ENCODE measurements at regions of chr12 and their contacts with region 1.

Region 1: DNA sequence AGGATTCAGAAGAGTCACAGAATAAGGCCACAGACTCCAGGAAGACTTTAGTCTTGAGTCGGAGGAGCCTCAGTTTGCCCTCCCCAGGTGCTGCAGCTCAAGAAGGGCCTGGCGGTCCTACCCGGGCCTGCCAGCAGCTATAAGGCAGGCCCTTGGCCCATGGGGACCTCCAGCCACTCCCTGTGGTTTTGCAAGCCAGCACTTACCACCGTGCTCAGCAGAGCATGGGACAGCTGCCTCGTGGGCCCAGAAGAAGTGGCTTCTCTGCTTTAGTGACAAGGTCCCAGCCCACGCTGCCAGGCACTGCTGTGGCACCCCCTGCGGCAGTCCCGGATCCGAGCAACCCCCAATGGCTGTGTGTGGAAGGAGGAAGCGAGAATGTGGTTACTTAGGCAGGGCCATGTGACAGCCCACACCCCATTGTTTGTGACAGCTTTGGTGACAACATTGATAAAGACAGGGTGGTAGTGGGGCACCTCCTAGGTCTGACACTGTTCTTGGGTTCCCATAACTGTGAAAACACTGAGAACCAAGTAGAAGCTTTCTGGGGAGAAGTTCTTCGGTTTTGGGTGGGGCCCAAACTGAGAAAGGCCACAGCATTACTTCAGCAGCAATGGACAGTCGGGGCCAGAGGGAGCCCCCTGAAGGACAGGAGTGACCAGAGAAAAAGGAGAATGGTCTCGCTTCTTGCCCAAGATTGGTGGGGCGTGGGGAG is at the start of gene SELPLG:
- DNase-seq: peak; percentile 82
- H3K4me3 Mint-ChIP-seq: peak within 1 kb of the TSS; percentile 94
- H3K27ac Mint-ChIP-seq: peak within 1 kb of the TSS; percentile 99
- H3K4me1 Mint-ChIP-seq: peaks cover 69% of the 10 kb centered on the region
- H3K27me3 Mint-ChIP-seq: no peaks in the 10 kb centered on the region
- total RNA-seq, gene SELPLG: 51.9 and 53.5 TPM in 2 replicates

Region 2: DNA sequence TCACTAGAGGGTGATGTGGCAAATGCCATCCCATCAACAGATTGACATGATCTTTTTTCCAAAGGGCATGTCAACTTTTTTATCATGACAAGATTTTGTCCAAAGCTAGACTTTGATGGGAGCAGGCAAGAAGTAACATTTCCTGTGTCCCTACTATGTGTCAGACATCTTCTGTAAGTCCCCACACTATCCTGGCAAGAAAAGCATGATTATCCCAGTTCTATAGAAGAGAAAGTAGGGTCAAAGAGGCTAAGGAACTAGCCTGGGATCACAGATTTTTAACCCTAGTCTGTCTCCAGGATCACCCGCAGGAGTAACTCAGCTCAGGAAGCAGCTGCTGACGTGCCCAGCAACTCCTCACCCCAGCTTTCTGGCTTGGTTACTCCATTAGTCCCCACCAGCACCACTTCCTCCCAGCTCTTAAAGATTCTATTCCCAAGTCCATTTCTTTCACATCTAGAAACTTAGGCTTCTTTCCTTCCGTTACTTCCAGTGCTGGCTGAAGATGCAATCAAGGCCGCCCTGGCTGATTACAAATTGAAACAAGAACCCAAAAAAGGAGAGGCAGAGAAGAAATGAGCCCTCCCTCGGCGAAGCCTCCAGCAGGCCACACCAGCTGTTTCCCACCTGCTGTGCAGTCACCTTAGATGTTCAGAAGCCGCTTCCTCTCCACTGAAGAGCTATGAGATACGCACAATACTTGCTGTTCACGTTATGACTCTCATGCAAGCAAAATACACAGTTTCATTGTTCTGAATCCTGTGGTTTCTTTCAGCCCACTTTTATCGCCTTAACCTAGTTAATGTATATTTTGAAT is 65.1 kb before region 1 on chr12:
- intact Hi-C with region 1: loop called (anchors 1 kb)
- DNase-seq: peak; percentile 76
- H3K4me3 Mint-ChIP-seq: peak overlapping the region; percentile 77
- H3K27ac Mint-ChIP-seq: peak overlapping the region; percentile 88
- H3K4me1 Mint-ChIP-seq: peaks cover 75% of the 10 kb centered on the region
- H3K27me3 Mint-ChIP-seq: no peaks in the 10 kb centered on the region

Region 3: GRCh38 chr12:108646600-108647579 is 13.2 kb after region 1 on chr12:
- intact Hi-C with region 1: loop called (anchors 1 kb)
- DNase-seq: no peak
- H3K4me3 Mint-ChIP-seq: no peak overlapping the region
- H3K27ac Mint-ChIP-seq: peak overlapping the region; percentile 64
- H3K4me1 Mint-ChIP-seq: peaks cover 36% of the 10 kb centered on the region
- H3K27me3 Mint-ChIP-seq: no peaks in the 10 kb centered on the region

Region 4: GRCh38 chr12:108691175-108691997 is 57.7 kb after region 1 on chr12:
- intact Hi-C with region 1: loop called (anchors 1 kb)
- DNase-seq: peak; percentile 50
- H3K4me3 Mint-ChIP-seq: peak overlapping the region; percentile 74
- H3K27ac Mint-ChIP-seq: peak overlapping the region; percentile 95
- H3K4me1 Mint-ChIP-seq: peaks cover 64% of the 10 kb centered on the region
- H3K27me3 Mint-ChIP-seq: no peaks in the 10 kb centered on the region

Region 5: GRCh38 chr12:108744021-108744897 is 110.6 kb after region 1 on chr12:
- intact Hi-C with region 1: no loop called
- DNase-seq: no peak
- H3K4me3 Mint-ChIP-seq: no peak overlapping the region
- H3K27ac Mint-ChIP-seq: no peak overlapping the region
- H3K4me1 Mint-ChIP-seq: no peaks in the 10 kb centered on the region
- H3K27me3 Mint-ChIP-seq: peaks cover 18% of the 10 kb centered on the region

Region 6: DNA sequence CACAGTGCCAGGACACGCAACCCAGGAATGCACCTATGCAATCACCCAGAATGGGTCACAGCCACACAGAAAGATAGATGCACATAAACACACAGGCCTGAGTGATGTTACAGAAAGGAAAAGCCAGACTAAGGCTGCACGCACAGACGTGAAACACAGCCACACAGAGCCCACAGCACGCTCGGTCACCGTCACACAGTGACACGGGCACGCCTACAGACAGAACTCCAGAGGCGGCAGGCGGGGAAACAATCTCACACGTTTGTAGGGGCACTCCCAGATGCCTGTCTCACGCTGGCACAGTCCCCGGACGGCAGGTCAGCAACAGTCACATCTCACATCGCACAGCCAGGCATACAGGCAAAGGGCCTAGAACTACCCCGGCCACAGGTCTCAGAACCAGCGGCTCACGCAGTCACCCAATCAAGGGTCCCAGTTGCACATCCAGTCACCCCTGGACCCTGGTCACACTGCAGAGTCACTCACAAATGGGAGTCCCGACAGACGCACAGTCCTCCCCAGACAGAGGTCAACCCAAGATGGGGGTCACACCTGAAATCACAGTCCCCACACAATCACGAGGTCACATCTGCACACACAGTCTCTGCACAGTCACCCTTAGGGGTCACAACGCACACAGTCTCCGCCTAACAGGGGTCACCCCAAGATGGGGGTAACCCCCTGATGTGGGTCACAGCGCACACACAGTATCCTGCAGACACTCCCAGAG is 222.9 kb after region 1 on chr12:
- intact Hi-C with region 1: loop called (anchors 2 kb)
- DNase-seq: peak; percentile 45
- H3K4me3 Mint-ChIP-seq: peak overlapping the region; percentile 96
- H3K27ac Mint-ChIP-seq: peak overlapping the region; percentile 96
- H3K4me1 Mint-ChIP-seq: peaks cover 52% of the 10 kb centered on the region
- H3K27me3 Mint-ChIP-seq: peaks cover 10% of the 10 kb centered on the region

Measured in activated T-helper 1 cell treated with anti-CD3 and anti-CD28 coated beads, Interleukin-12 subunit alpha, Interleukin-12 subunit beta, Interleukin-2, Interleukin-4 antibody, amounts not matched to agents 30 ng/mL and 10 ng/mL and 1 ng/mL, durations not matched to agents 14 hours and 24 hours and 36 hours (primary cell).